Mammary epithelial cell (primary cell): ENCODE measurements at regions of chr2 and their contacts with region 1.

Region 1: GRCh38 chr2:28423856-28424605 is 31.4 kb downstream of the FOSL2 start:
- DNase-seq: no peak
- H3K4me3 ChIP-seq: no peak overlapping the region
- H3K27ac ChIP-seq: no peak overlapping the region
- H3K4me1 ChIP-seq: peaks cover 6% of the 10 kb centered on the region
- H3K27me3 ChIP-seq: no peaks in the 10 kb centered on the region
- CTCF ChIP-seq: no peak

Region 2: GRCh38 chr2:28152585-28153280 is 271.3 kb before region 1 on chr2:
- CTCF ChIA-PET with region 1: no interaction called
- dilution Hi-C with region 1: no loop called
- in situ Hi-C with region 1: no loop called
- intact Hi-C with region 1: no loop called
- DNase-seq: peak; percentile 59
- H3K4me3 ChIP-seq: no peak overlapping the region
- H3K27ac ChIP-seq: no peak overlapping the region
- H3K4me1 ChIP-seq: peaks cover 11% of the 10 kb centered on the region
- H3K27me3 ChIP-seq: no peaks in the 10 kb centered on the region
- CTCF ChIP-seq: no peak

Region 3: DNA sequence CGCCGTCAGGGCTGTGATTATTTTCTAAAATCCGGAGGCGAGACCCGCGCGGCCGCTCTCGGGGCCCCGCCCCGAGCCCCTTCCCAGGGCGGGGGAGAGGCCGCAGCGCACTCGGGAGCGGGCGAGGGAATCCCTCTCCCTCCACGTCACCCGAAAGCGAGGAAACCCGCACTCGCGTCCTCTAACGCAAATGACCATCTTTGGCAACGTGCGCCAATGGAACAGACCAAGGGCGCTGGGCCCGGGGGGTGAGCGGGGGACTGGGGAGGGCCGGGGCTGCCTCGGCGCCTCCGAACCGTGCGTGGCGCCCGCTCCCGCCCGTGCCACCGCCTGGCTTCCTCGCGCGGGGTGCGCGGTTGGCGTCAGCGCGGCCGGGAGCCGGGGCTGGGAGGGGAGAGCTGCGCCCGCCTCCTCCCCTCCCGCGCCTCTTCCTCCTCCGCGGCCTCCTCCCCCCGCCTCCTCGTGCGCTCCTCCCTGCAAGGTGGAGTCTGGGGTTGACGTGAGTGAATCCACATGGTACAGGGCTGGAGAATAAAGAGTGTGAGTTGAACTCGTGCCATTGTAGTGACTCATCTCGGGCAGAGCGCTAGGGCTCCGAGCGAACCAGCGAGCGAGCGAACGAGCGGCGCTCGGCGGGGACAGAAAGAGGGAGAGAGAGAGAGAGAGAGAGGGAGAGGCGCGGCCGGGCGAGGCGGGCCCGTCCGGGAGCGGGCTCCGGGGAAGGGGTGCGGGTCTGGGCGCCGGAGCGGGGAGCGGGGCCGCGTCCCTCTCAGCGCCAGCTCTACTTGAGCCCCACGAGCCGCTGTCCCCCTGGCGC is 31.5 kb before region 1 on chr2 and contains the start of gene FOSL2:
- CTCF ChIA-PET with region 1: no interaction called
- dilution Hi-C with region 1: no loop called
- in situ Hi-C with region 1: no loop called
- intact Hi-C with region 1: no loop called
- DNase-seq: peak; percentile 100
- H3K4me3 ChIP-seq: peak within 1 kb of the TSS; percentile 80 to 93 (median 83)
- H3K27ac ChIP-seq: peak within 1 kb of the TSS; percentile 95
- H3K4me1 ChIP-seq: peaks cover 36% of the 10 kb centered on the region
- H3K27me3 ChIP-seq: no peaks in the 10 kb centered on the region
- CTCF ChIP-seq: peak in 1 of 2 donors; percentile 6
- total RNA-seq, gene FOSL2: 89.9 to 92.9 TPM

Region 4: DNA sequence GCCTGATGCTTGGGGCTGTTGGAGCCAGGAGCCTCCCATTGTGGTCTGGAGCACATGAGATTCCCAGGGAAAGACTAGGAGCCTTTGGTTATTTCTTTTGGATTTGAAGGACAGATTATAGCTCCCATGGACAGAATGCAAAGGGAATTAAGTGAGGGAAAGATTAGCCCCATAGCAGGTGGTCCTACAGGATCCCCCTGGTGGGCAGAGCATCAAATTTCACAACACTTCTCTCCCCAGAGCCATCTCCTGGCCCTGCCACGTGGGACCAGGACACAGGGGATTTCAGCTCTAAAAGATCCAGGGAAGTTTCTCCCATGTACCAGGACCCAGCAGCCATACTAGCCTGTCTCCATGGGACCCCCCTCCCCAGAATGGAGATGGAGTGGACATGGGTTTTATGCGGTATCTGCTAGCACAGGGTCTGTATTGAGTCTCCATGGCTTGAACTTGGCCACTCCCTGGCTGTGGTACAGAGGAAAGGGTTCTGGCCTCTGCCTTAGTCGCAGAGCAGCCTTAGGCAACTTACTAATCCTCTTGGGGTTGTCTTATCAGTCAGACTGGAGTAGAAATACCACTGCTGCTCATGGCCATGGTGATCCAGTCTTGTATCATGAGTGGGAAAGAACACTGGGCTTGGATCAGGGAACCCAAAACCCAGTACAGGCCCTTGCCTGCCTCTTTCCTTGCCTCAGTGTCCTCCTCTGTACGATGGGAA is 65.0 kb after region 1 on chr2:
- CTCF ChIA-PET with region 1: no interaction called
- dilution Hi-C with region 1: loop called (anchors 10 kb)
- in situ Hi-C with region 1: no loop called
- intact Hi-C with region 1: no loop called
- DNase-seq: peak; percentile 36
- H3K4me3 ChIP-seq: no peak overlapping the region
- H3K27ac ChIP-seq: no peak overlapping the region
- H3K4me1 ChIP-seq: peaks cover 3% of the 10 kb centered on the region
- H3K27me3 ChIP-seq: no peaks in the 10 kb centered on the region
- CTCF ChIP-seq: no peak